Mammary epithelial cell (primary cell): ENCODE measurements at regions of chr11 and their contacts with region 1.

Region 1: DNA sequence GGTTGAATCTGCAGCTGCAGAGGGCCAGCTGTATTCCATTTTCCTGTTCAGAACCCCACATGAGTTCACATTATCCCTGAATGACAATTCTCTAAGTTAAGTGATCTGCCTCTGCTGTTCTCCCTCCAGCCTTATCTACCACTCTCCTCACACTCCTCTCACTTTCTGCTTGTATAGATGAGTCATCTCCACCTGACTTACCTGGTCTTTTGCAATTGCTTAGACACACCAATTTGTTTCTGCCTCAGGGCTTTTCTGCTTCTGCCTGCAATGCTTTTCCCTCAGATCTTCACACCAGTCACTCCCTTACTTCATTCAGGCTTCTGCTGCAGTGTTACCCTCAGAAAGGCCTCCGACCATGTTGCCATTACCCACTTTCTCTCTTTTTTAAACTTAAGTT is 118.1 kb downstream of the ATM start:
- DNase-seq: peak; percentile 96
- H3K4me3 ChIP-seq: no peak overlapping the region
- H3K27ac ChIP-seq: peak overlapping the region; percentile 18
- H3K4me1 ChIP-seq: peaks cover 10% of the 10 kb centered on the region
- H3K27me3 ChIP-seq: no peaks in the 10 kb centered on the region
- CTCF ChIP-seq: no peak

Region 2: DNA sequence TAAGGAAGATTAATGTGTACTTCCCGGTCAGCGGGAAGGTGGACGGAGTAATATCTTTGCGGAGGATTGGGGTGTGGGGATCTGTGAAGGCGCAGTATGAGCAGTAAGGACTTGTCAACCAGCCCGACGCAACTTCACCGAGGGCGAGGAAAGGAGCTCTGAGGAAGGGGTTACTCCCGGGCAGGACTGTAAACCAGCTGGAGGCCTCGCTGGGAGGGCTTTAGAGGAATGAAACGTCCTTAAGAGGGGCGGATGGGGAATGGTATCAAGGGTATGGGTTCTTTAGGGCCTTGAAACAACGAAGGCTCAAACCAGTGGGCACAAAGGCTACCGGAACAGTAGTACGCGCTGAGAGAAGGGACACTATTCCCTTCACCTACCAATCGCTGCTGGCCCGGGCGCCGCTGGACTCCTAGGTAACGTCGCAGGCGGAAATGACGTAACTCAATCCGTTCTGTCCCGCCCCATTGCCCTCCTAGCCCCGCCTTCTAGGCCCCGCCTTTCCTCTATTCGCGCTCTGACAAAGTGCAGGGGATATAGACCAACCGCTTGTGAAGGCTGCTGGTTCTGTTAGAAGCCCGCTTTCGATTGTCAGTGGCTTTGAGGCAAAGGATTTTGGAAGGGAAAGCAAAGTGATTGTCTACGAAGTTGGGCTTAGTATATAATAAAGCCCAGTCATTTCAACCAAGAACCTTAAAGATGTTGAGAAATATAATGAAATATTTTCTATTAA is 126.3 kb after region 1 on chr11 and contains the start of gene C11orf65:
- CTCF ChIA-PET with region 1: no interaction called
- dilution Hi-C with region 1: no loop called
- in situ Hi-C with region 1: no loop called
- intact Hi-C with region 1: loop called (anchors 10 kb)
- DNase-seq: peak; percentile 94
- H3K4me3 ChIP-seq: peak within 1 kb of the TSS; percentile 58 to 70 (median 62)
- H3K27ac ChIP-seq: peak within 1 kb of the TSS; percentile 96
- H3K4me1 ChIP-seq: no peaks in the 10 kb centered on the region
- H3K27me3 ChIP-seq: no peaks in the 10 kb centered on the region
- CTCF ChIP-seq: no peak
- total RNA-seq, gene C11orf65: 0.67 to 1.1 TPM

Region 3: GRCh38 chr11:108568195-108568858 is 227.4 kb after region 1 on chr11:
- CTCF ChIA-PET with region 1: no interaction called
- dilution Hi-C with region 1: no loop called
- in situ Hi-C with region 1: no loop called
- intact Hi-C with region 1: no loop called
- DNase-seq: no peak
- H3K4me3 ChIP-seq: no peak overlapping the region
- H3K27ac ChIP-seq: no peak overlapping the region
- H3K4me1 ChIP-seq: peaks cover 9% of the 10 kb centered on the region
- H3K27me3 ChIP-seq: no peaks in the 10 kb centered on the region
- CTCF ChIP-seq: no peak